Activated T-helper 1 cell treated with anti-CD3 and anti-CD28 coated beads, Interleukin-12 subunit alpha, Interleukin-12 subunit beta, Interleukin-2, Interleukin-4 antibody, amounts not matched to agents 30 ng/mL and 10 ng/mL and 1 ng/mL, durations not matched to agents 14 hours and 24 hours and 36 hours (primary cell): ENCODE measurements at regions of chr3 and their contacts with region 1.

Region 1: DNA sequence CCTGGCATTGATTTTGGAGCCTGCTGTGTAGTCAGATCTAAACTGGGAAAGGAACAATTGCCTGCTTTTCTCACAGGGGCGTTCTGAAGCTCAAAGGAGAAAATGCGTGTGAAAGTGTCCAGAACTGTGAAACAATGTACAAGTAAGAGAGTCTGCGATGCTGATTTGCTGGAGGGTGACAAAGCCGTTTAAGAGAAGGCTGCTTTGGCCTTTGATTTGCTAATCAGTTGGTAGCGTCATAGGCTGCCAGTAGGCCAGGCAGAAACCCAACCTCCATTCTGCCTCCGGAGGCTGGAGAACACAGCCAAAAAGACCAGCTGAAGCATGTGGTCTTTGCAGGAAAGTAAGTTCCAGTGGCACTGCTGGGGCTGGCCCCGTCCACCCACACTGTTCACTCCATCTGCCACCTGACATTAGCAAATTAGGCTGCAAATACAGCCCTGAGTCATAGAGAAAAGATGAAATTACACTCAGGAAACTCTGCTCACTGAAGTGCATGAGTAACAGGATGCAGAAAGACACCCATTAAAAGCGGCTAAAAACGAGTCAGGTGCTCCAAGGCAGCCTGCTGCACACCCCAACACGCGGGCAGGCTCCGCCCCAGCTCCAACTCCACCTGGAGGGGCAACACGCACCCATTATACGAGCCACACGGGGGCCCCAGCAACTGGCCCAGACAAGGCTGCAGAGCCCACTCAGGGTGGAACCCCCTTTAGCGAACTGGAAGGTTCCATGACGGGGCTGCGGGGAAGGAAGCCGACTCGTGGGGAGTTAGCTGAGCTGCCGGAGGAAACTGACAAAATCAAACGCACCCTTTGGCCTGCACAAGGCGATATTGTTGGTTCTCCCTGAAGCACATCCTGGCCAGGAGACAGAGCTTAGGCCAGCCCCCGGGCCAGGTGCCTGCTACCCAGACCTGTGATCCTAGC is 31.6 kb downstream of the ZDHHC19 start:
- DNase-seq: peak; percentile 82
- H3K4me3 Mint-ChIP-seq: peak overlapping the region; percentile 74
- H3K27ac Mint-ChIP-seq: peak overlapping the region; percentile 97
- H3K4me1 Mint-ChIP-seq: peaks cover 61% of the 10 kb centered on the region
- H3K27me3 Mint-ChIP-seq: no peaks in the 10 kb centered on the region

Region 2: GRCh38 chr3:195692354-195692685 is 487.3 kb before region 1 on chr3:
- intact Hi-C with region 1: loop called (anchors 1 kb)
- DNase-seq: no peak
- H3K4me3 Mint-ChIP-seq: peak overlapping the region; percentile 56
- H3K27ac Mint-ChIP-seq: peak overlapping the region; percentile 94
- H3K4me1 Mint-ChIP-seq: peaks cover 37% of the 10 kb centered on the region
- H3K27me3 Mint-ChIP-seq: no peaks in the 10 kb centered on the region

Region 3: GRCh38 chr3:196081791-196082618 is 97.6 kb before region 1 on chr3 and contains the start of gene TFRC:
- intact Hi-C with region 1: loop called (anchors 1 kb)
- DNase-seq: peak; percentile 95
- H3K4me3 Mint-ChIP-seq: peak within 1 kb of the TSS; percentile 100
- H3K27ac Mint-ChIP-seq: peak within 1 kb of the TSS; percentile 98
- H3K4me1 Mint-ChIP-seq: peaks cover 38% of the 10 kb centered on the region
- H3K27me3 Mint-ChIP-seq: no peaks in the 10 kb centered on the region
- total RNA-seq, gene TFRC: 791 TPM in 2 replicates

Region 4: GRCh38 chr3:196159952-196160804 is 19.5 kb before region 1 on chr3:
- intact Hi-C with region 1: loop called (anchors 1 kb)
- DNase-seq: peak; percentile 56
- H3K4me3 Mint-ChIP-seq: peak overlapping the region; percentile 9
- H3K27ac Mint-ChIP-seq: peak overlapping the region; percentile 76
- H3K4me1 Mint-ChIP-seq: peaks cover 38% of the 10 kb centered on the region
- H3K27me3 Mint-ChIP-seq: no peaks in the 10 kb centered on the region

Region 5: GRCh38 chr3:196274585-196274984 is 94.9 kb after region 1 on chr3:
- intact Hi-C with region 1: loop called (anchors 1 kb)
- DNase-seq: peak; percentile 78
- H3K4me3 Mint-ChIP-seq: peak overlapping the region; percentile 79
- H3K27ac Mint-ChIP-seq: peak overlapping the region; percentile 98
- H3K4me1 Mint-ChIP-seq: peaks cover 60% of the 10 kb centered on the region
- H3K27me3 Mint-ChIP-seq: no peaks in the 10 kb centered on the region

Region 6: GRCh38 chr3:196486263-196486662 is 306.6 kb after region 1 on chr3:
- intact Hi-C with region 1: no loop called
- DNase-seq: no peak
- H3K4me3 Mint-ChIP-seq: no peak overlapping the region
- H3K27ac Mint-ChIP-seq: no peak overlapping the region
- H3K4me1 Mint-ChIP-seq: no peaks in the 10 kb centered on the region
- H3K27me3 Mint-ChIP-seq: no peaks in the 10 kb centered on the region